ENCODE measurements at regions of chr6 and their contacts with region 1.

Region 1: DNA sequence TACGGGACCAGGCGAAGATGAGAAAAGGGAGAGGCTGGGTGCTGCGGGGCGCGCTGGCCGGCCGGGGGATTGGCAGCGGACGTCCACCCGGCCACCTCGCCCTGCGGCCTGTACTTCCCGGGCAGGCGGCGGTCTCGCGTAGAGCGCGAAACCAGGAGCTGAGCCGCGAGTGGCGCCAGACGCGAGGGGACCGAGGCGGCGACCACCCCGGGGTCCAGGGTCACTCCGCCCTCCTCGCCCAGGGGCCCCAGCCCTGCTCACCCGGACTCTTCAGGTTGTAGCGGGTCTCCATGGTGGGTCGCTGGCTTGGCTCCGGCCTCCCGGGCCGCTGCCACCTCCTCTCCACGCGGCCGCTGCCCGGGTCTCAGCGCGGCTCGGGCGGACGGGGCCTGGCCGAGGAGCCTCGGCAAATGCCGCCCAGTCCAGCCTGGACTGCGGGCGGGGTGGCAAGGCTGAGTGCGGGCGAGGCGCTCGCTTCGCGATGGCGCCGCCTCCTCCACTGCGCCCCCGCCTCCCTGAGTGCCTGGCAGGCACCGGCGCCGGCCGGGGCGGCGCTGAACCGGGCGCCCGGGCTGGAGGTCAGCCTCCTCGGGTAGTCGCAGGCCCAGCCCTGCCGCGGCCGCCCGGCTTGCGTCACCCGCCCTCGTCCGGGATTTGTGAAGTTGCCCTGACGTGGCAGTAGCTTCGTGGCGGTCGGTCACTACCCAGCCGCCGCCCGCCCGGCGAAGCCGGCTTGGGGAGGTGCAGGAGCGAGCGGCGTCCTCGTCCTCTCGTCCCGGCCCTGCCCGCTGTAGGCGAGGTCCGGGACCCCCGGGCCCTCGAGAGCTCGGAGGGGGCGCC is at the start of gene UBE2J1:
- DNase-seq: peak; percentile 48 to 87 (median 71)
- ATAC-seq: peak; percentile 81
- H3K4me3 ChIP-seq: peak within 1 kb of the TSS; percentile 58 to 67
- H3K4me3 Mint-ChIP-seq: peak within 1 kb of the TSS; percentile 97
- H3K27ac ChIP-seq: peak within 1 kb of the TSS; percentile 74 to 77
- H3K27ac Mint-ChIP-seq: peak within 1 kb of the TSS; percentile 97
- H3K4me1 ChIP-seq: peaks cover 42% of the 10 kb centered on the region
- H3K4me1 Mint-ChIP-seq: peaks cover 69% of the 10 kb centered on the region
- H3K27me3 ChIP-seq: no peaks in the 10 kb centered on the region
- H3K27me3 Mint-ChIP-seq: no peaks in the 10 kb centered on the region
- CTCF ChIP-seq: no peak
- total RNA-seq, gene UBE2J1: 34.1 to 37.5 TPM

Region 2: GRCh38 chr6:88596801-88597200 is 755.7 kb before region 1 on chr6:
- CTCF ChIA-PET with region 1: no interaction called
- POLR2A ChIA-PET with region 1: no interaction called
- intact Hi-C with region 1: no loop called
- DNase-seq: no peak
- ATAC-seq: no peak
- H3K4me3 ChIP-seq: no peak overlapping the region
- H3K4me3 Mint-ChIP-seq: no peak overlapping the region
- H3K27ac ChIP-seq: no peak overlapping the region
- H3K27ac Mint-ChIP-seq: no peak overlapping the region
- H3K4me1 ChIP-seq: no peaks in the 10 kb centered on the region
- H3K4me1 Mint-ChIP-seq: no peaks in the 10 kb centered on the region
- H3K27me3 ChIP-seq: no peaks in the 10 kb centered on the region
- H3K27me3 Mint-ChIP-seq: peaks cover 3% of the 10 kb centered on the region
- CTCF ChIP-seq: no peak

Region 3: GRCh38 chr6:89145787-89146646 is 206.5 kb before region 1 on chr6 and contains the start of gene PM20D2:
- CTCF ChIA-PET with region 1: interaction called, 3 read pairs
- POLR2A ChIA-PET with region 1: interaction called, 3 read pairs
- intact Hi-C with region 1: loop called in 1 of 2 experiments (anchors 10 kb)
- DNase-seq: peak; percentile 35 to 80 (median 64)
- ATAC-seq: peak; percentile 77
- H3K4me3 ChIP-seq: peak within 1 kb of the TSS; percentile 66 to 87
- H3K4me3 Mint-ChIP-seq: peak within 1 kb of the TSS; percentile 96
- H3K27ac ChIP-seq: peak within 1 kb of the TSS; percentile 73 to 85
- H3K27ac Mint-ChIP-seq: peak within 1 kb of the TSS; percentile 97
- H3K4me1 ChIP-seq: peaks cover 19% of the 10 kb centered on the region
- H3K4me1 Mint-ChIP-seq: peaks cover 34% of the 10 kb centered on the region
- H3K27me3 ChIP-seq: no peaks in the 10 kb centered on the region
- H3K27me3 Mint-ChIP-seq: no peaks in the 10 kb centered on the region
- CTCF ChIP-seq: no peak
- total RNA-seq, gene PM20D2: 5.5 to 6.2 TPM

Region 4: DNA sequence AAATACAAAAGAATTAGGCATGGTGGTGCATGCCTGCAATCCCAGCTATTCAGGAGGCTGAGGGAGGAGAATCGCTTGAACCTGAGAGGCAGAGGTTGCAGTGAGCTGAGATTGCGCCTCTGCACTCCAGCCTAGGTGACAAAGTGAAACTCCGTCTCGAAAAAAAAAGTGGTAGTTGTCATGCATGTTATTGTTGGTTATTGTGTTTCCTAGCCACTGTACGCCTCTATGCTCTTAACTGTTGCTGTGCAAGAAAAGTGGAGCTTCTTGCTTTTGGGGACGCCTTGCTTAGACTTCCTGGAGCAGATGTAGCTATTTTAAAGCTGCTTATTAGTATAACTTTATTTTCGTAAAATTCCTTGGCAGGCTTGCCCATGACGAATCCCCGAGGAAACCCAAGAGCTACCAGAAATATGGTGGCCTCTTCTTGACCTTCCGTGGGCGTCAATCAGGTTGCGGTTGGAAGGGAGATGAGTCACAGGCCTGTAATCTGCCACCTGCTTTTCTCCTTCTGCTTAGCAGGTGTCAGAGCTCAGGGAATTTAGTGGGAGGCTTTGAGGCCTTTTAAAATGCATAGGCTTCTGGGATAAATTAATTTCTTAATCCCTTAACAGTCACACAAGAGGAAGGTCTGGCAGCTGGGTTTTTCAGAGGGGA is 54.7 kb before region 1 on chr6:
- CTCF ChIA-PET with region 1: no interaction called
- POLR2A ChIA-PET with region 1: interaction called, 6 read pairs
- intact Hi-C with region 1: loop called in 1 of 2 experiments (anchors 5 kb)
- DNase-seq: peak in 8 of 9 experiments; percentile 19 to 77 (median 46)
- ATAC-seq: peak; percentile 73
- H3K4me3 ChIP-seq: no peak overlapping the region
- H3K4me3 Mint-ChIP-seq: peak overlapping the region; percentile 30
- H3K27ac ChIP-seq: peak overlapping the region in 1 of 2 experiments; percentile 34
- H3K27ac Mint-ChIP-seq: peak overlapping the region; percentile 79
- H3K4me1 ChIP-seq: peaks cover 17% of the 10 kb centered on the region
- H3K4me1 Mint-ChIP-seq: peaks cover 20% of the 10 kb centered on the region
- H3K27me3 ChIP-seq: no peaks in the 10 kb centered on the region
- H3K27me3 Mint-ChIP-seq: no peaks in the 10 kb centered on the region
- CTCF ChIP-seq: no peak

Region 5: GRCh38 chr6:89829591-89830385 is 477.3 kb after region 1 on chr6 and contains the start of gene CASP8AP2:
- CTCF ChIA-PET with region 1: no interaction called
- POLR2A ChIA-PET with region 1: no interaction called
- intact Hi-C with region 1: loop called (anchors 5 to 10 kb)
- DNase-seq: peak; percentile 88 to 99 (median 93)
- ATAC-seq: peak; percentile 94
- H3K4me3 ChIP-seq: peak within 1 kb of the TSS; percentile 82 to 95
- H3K4me3 Mint-ChIP-seq: peak within 1 kb of the TSS; percentile 99
- H3K27ac ChIP-seq: peak within 1 kb of the TSS; percentile 71 to 84
- H3K27ac Mint-ChIP-seq: peak within 1 kb of the TSS; percentile 97
- H3K4me1 ChIP-seq: peaks cover 14% of the 10 kb centered on the region
- H3K4me1 Mint-ChIP-seq: peaks cover 35% of the 10 kb centered on the region
- H3K27me3 ChIP-seq: no peaks in the 10 kb centered on the region
- H3K27me3 Mint-ChIP-seq: no peaks in the 10 kb centered on the region
- CTCF ChIP-seq: no peak
- total RNA-seq, gene CASP8AP2: 13.1 to 14.8 TPM